GM10248 (cell line): ENCODE measurements at regions of chr10 and their contacts with region 1.

Region 1: DNA sequence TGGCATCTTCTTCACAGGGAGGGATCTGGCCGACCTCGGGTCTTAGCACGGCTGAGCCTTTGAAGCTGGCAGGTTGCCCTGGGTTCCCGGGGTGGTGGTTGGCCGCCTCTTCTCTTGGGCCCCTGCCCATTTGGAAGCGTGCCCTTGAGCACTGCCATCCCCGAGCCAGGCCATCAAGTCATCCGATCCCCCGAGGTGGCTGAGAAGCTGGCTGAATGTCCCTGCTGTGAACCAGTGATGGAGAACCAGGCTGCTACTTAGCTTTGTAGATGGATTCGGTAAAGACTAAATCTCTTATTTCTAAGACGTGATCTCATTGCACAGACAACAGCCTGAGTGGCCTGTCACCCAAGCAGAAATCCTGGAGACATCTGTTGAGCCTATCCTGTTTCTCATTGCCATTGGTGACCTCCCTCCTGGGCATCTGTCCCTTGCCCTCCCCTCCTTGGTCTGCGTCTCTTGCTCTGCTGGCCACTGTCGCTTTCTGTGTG is 74.3 kb downstream of the GRK5 start:
- DNase-seq: no peak
- CTCF ChIP-seq: no peak

Region 2: DNA sequence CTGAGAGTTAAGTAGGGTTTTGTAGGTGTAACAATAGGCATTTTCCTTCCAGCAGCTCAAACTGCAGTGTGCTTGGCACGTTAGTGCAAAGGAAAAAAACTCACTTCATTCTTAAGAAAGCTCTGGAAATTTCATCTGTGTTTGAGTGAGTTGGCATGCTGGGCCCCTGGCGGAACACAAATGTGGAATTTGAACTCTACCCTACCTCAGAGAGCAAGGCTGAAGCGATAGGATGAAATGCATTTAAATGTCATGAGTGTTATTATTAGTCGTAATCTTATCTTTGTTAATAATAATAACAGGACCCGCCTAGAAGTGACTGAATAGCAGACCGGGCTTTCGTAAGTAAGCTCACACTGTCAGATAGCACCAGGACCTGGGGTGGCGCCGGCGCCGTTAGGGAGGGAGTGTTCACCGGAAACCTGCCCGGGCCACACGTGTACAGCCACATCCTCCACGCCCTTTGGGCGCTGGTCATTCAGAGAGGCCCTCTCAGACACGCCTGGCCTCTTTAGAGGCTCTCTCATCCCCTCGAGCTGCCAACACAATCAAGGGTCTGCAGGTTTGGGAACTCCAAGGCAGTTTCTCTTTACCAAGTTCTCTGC is 10.8 kb before region 1 on chr10:
- CTCF ChIA-PET with region 1: interaction called, 32 read pairs
- POLR2A ChIA-PET with region 1: no interaction called
- DNase-seq: peak; percentile 70
- CTCF ChIP-seq: no peak